CD4-positive, alpha-beta memory T cell (primary cell): ENCODE measurements at regions of chr22 and their contacts with region 1.

Region 1: DNA sequence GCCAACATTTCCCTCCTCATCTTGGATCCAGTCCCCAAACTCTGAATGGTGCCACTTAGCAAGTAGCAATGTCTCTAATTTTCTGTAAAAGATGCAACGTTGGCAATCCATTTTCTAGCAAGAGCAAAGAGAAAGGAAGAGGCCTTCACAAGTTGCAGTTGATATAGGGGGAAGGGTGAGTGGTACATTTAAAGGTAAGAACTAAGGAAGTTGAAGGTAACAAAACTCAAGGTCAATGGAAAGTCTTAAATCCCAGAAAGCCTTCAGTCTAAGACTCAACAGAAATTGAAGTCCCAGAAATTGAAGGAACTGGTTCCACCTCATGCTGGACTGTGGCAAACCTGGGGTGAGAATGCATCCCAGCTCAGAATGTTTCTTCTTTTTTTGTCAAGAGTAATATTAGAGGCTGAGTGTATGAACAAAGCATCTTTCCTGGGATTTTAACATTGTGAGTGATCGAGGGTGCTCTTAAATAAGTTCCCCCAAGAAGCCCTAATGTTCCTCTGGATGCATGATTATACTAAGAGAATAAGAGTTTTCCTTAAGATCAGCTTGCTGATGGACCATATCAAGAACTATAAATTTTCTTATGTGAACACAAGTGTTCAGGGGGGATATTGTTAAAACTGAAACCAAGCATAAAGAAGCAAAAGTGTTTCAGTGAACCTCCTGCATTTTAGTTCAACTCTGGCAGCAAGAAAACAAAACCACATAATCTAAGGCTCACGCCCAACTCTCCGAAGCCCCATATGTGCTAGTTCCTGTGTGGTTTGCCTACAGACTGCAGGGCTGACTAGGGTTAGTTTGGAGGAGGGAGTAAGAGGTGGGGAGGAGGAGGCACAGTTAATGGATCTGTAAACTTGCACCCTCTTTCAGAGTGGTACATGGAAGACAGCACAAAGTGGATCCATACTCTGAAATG is at the start of gene GRAP2:
- DNase-seq: peak; percentile 84 to 91 (median 86)
- H3K4me3 ChIP-seq: peak within 1 kb of the TSS; percentile 57 to 72
- H3K4me3 Mint-ChIP-seq: peak within 1 kb of the TSS; percentile 91 to 100 (median 97)
- H3K27ac ChIP-seq: peak within 1 kb of the TSS; percentile 75
- H3K27ac Mint-ChIP-seq: peak within 1 kb of the TSS in 6 of 7 donors; percentile 95 to 98 (median 98)
- H3K4me1 ChIP-seq: peaks cover 29% of the 10 kb centered on the region
- H3K4me1 Mint-ChIP-seq: peaks cover 9 to 31% (median 17%) of the 10 kb centered on the region in 4 donors
- H3K27me3 ChIP-seq: no peaks in the 10 kb centered on the region
- H3K27me3 Mint-ChIP-seq: no peaks in the 10 kb centered on the region
- total RNA-seq, gene GRAP2: 134 to 140 TPM

Region 2: GRCh38 chr22:39661842-39662676 is 238.5 kb before region 1 on chr22:
- CTCF ChIA-PET with region 1: no interaction called
- POLR2A ChIA-PET with region 1: interaction called, 3 read pairs
- intact Hi-C with region 1: loop called (anchors 1 kb)
- DNase-seq: peak; percentile 83 to 88 (median 86)
- H3K4me3 ChIP-seq: peak overlapping the region; percentile 17 to 51
- H3K4me3 Mint-ChIP-seq: peak overlapping the region; percentile 35 to 87 (median 82)
- H3K27ac ChIP-seq: peak overlapping the region; percentile 34
- H3K27ac Mint-ChIP-seq: peak overlapping the region in 5 of 7 donors; percentile 59 to 91 (median 90)
- H3K4me1 ChIP-seq: peaks cover 67% of the 10 kb centered on the region
- H3K4me1 Mint-ChIP-seq: peaks cover 34 to 68% (median 52%) of the 10 kb centered on the region in 4 donors
- H3K27me3 ChIP-seq: no peaks in the 10 kb centered on the region
- H3K27me3 Mint-ChIP-seq: no peaks in the 10 kb centered on the region

Region 3: GRCh38 chr22:39721206-39722031 is 179.1 kb before region 1 on chr22:
- CTCF ChIA-PET with region 1: no interaction called
- POLR2A ChIA-PET with region 1: no interaction called
- intact Hi-C with region 1: no loop called
- DNase-seq: no peak
- H3K4me3 ChIP-seq: no peak overlapping the region
- H3K4me3 Mint-ChIP-seq: no peak overlapping the region
- H3K27ac ChIP-seq: no peak overlapping the region
- H3K27ac Mint-ChIP-seq: no peak overlapping the region
- H3K4me1 ChIP-seq: no peaks in the 10 kb centered on the region
- H3K4me1 Mint-ChIP-seq: peaks cover 0 to 2% (median 0%) of the 10 kb centered on the region in 4 donors
- H3K27me3 ChIP-seq: no peaks in the 10 kb centered on the region
- H3K27me3 Mint-ChIP-seq: no peaks in the 10 kb centered on the region

Region 4: DNA sequence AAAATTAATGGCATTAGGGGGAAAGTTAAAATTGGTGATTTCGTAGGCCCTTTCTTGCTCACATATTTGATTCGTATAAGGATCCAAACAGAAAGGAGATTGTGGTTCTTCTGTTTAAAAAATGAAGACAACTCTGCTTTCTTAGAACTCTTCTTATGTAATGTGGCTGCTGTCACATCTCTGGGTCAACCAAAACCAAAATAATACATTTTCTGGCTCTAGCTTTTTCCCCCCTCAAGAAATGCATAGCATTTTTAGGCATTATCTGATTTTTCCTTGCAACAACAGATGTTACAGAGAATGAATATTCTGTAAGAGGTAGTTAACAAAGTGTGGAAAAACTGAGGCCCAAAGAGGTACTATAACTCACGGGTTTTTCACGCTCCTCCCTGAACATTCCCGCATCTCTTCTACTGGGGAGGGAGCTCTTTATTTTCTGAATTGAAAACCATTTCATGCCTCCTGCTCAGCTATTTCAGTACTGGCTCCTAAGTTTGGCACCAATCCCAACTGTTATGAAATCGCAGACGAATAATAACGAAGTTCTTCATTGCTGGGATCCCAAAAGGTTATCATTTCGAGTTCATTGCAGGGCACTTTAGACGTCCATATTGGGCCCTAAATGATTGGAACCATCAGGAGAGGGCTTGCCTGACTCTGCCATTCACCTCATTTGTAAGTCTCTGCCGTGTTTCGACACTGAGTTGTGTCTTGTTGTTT is 17.4 kb after region 1 on chr22:
- CTCF ChIA-PET with region 1: interaction called, 13 read pairs
- POLR2A ChIA-PET with region 1: interaction called, 424 read pairs
- intact Hi-C with region 1: no loop called
- DNase-seq: no peak
- H3K4me3 ChIP-seq: peak overlapping the region in 1 of 2 donors; percentile 38
- H3K4me3 Mint-ChIP-seq: peak overlapping the region; percentile 60 to 89 (median 79)
- H3K27ac ChIP-seq: peak overlapping the region; percentile 55
- H3K27ac Mint-ChIP-seq: peak overlapping the region in 6 of 7 donors; percentile 90 to 96 (median 92)
- H3K4me1 ChIP-seq: peaks cover 98% of the 10 kb centered on the region
- H3K4me1 Mint-ChIP-seq: peaks cover 78 to 99% (median 89%) of the 10 kb centered on the region in 4 donors
- H3K27me3 ChIP-seq: no peaks in the 10 kb centered on the region
- H3K27me3 Mint-ChIP-seq: peaks cover 0 to 1% of the 10 kb centered on the region in 2 donors

Region 5: GRCh38 chr22:39932918-39933649 is 32.5 kb after region 1 on chr22:
- CTCF ChIA-PET with region 1: interaction called, 15 read pairs
- POLR2A ChIA-PET with region 1: interaction called, 424 read pairs
- intact Hi-C with region 1: loop called (anchors 2 kb)
- DNase-seq: peak in 4 of 5 donors; percentile 55 to 61 (median 58)
- H3K4me3 ChIP-seq: no peak overlapping the region
- H3K4me3 Mint-ChIP-seq: peak overlapping the region; percentile 61 to 88 (median 79)
- H3K27ac ChIP-seq: peak overlapping the region; percentile 53
- H3K27ac Mint-ChIP-seq: peak overlapping the region in 6 of 7 donors; percentile 92 to 97 (median 96)
- H3K4me1 ChIP-seq: peaks cover 100% of the 10 kb centered on the region
- H3K4me1 Mint-ChIP-seq: peaks cover 55 to 56% (median 55%) of the 10 kb centered on the region in 4 donors
- H3K27me3 ChIP-seq: no peaks in the 10 kb centered on the region
- H3K27me3 Mint-ChIP-seq: no peaks in the 10 kb centered on the region

Region 6: DNA sequence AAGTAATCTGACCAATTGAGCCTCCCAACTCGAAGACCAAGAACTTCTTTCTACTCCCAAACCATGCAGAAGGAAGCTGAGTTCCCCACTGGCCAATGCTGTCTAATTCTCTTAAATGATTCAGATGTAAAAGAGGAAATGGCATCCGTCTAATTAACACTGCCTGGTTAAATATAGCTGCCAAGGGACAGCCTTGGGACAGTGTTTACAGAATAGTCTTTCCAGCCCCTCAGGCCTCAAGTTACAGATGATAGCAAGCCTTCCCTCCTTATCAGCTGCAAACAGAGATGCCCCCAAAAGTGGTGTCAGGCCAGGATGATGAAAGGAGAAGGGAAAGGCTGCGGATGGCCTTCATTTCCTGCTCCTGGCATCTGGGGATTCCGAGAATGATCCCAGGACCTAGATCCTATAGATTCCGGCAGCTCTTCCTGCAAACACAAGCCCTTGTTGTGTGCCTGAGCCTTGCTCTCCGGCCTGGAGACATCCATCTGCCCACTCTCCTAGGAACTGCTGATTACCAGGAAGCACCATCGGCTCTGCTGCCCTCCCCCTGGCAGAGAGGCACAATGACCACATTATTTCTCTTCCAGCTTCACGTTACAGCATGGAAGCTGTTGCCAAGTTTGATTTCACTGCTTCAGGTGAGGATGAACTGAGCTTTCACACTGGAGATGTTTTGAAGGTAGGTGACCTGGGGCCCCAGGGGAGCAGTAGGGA is 46.1 kb after region 1 on chr22:
- CTCF ChIA-PET with region 1: interaction called, 10 read pairs
- POLR2A ChIA-PET with region 1: interaction called, 7 read pairs
- intact Hi-C with region 1: no loop called
- DNase-seq: no peak
- H3K4me3 ChIP-seq: no peak overlapping the region
- H3K4me3 Mint-ChIP-seq: peak overlapping the region; percentile 29 to 62 (median 43)
- H3K27ac ChIP-seq: peak overlapping the region; percentile 6
- H3K27ac Mint-ChIP-seq: peak overlapping the region in 6 of 7 donors; percentile 60 to 94 (median 86)
- H3K4me1 ChIP-seq: peaks cover 100% of the 10 kb centered on the region
- H3K4me1 Mint-ChIP-seq: peaks cover 76 to 100% (median 90%) of the 10 kb centered on the region in 4 donors
- H3K27me3 ChIP-seq: no peaks in the 10 kb centered on the region
- H3K27me3 Mint-ChIP-seq: no peaks in the 10 kb centered on the region